ENCODE measurements at regions of chr3 and their contacts with region 1.

Region 1: DNA sequence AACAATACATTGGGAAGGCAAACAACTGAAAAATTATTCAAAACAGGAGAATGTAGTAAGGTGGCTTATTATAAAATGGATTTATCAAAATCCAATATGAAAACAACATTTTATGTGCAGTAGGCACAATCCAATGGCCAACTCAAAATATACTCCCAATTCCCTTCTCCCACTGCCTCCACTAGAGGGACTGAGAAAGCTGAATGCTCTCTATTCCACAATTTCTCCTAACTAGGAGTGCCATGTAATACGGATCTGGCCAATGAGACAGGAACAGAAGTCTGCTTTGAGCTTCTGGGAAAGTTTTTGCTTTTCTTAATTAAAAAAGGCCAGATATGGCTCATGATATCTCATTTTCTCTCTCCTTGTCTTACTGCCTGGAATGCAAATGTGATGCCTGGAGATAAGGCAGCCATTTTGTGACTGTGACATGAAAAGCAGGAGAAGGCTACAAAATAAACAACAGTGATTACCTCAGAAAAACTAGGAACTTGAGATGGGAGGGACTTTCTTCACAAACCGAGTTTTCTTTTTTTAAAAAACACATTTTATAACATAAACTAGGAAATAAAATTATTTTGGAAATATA is 18.8 kb upstream of the VGLL4 start:
- DNase-seq: no peak
- H3K4me3 ChIP-seq: peak overlapping the region; percentile 11 to 16
- H3K27ac ChIP-seq: peak overlapping the region; percentile 66 to 70
- H3K4me1 ChIP-seq: peaks cover 6 to 29% of the 10 kb centered on the region in 2 donors
- H3K27me3 ChIP-seq: no peaks in the 10 kb centered on the region
- CTCF ChIP-seq: peak in 2 of 3 experiments; percentile 46 to 48

Region 2: GRCh38 chr3:11719406-11720230 is 57.1 kb after region 1 on chr3:
- intact Hi-C with region 1: loop called (anchors 1 kb)
- DNase-seq: peak; percentile 16 to 83
- H3K4me3 ChIP-seq: peak overlapping the region; percentile 70 to 93
- H3K27ac ChIP-seq: peak overlapping the region; percentile 84 to 98
- H3K4me1 ChIP-seq: peaks cover 0 to 14% of the 10 kb centered on the region in 2 donors
- H3K27me3 ChIP-seq: no peaks in the 10 kb centered on the region
- CTCF ChIP-seq: no peak